ENCODE measurements at regions of chr18 and their contacts with region 1.

Region 1: DNA sequence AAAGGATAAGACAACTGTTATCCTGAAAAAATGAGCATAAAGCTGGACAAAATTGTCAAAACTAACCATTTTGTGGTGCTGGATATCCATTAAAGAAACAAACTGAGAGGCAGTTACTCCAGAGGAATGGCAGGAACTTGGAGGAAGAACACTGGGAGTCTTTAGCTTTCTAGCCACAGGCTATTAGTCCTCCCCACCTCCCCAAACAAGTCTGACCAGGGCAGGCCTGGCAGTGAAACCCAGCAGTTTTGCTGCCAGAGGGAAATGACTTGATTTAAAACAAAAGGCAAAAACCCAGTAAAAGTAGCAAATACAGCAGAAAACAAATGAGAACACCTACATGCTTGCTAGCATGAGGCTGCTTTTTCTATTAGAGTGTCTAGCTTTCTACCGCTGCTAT is 34.9 kb downstream of the OSBPL1A start:
- DNase-seq: no peak
- ATAC-seq: no peak
- H3K4me3 ChIP-seq: no peak overlapping the region
- H3K27ac ChIP-seq: no peak overlapping the region
- H3K4me1 ChIP-seq: no peaks in the 10 kb centered on the region
- H3K27me3 ChIP-seq: no peaks in the 10 kb centered on the region
- CTCF ChIP-seq: no peak

Region 2: GRCh38 chr18:24086082-24086481 is 276.7 kb before region 1 on chr18:
- intact Hi-C with region 1: no loop called
- DNase-seq: no peak
- ATAC-seq: no peak
- H3K4me3 ChIP-seq: no peak overlapping the region
- H3K27ac ChIP-seq: no peak overlapping the region
- H3K4me1 ChIP-seq: no peaks in the 10 kb centered on the region
- H3K27me3 ChIP-seq: no peaks in the 10 kb centered on the region
- CTCF ChIP-seq: no peak

Region 3: DNA sequence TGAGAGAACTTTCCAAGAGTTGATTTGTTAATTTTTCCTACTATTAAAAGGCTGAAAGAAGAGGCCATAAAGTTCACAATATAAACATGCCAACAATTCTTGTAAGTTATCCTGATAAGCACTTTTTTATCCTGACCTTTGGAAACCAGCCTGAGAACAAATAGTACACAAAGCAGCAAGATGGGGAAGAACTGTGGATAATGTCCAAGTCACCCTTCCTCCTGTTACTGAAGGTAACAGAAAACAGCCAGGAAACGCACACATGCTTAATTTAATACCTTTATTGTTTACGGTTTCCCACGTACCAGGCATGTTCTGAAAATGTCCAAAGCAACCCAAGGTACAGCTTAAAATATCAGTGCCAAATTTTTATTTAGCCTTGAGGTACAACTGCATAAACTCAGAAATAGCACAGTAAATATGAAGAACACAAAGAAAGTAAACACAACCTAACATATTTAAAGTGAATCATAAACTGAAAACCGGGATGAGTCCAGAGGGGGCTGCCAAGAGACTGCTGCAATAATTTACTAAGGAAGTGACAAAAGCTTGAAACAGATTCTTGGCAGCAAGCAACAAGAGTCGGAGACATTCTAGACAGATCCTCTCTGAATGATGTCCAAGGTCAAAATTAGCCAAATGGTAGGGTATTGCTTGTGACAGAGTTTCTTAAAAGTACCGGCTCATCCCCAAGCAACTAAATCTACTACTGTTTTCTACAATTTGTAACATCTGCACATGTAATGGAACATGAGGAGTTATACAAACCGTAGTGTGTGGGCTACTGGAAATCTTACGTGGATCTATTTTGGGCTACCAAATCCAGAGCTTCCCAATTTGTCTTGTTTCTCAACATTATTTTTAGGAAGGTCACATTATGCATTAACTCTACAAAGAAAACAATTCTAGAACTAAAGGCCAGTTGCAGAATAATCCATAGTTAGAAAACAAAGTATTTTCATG is 130.7 kb before region 1 on chr18:
- intact Hi-C with region 1: no loop called
- DNase-seq: no peak
- ATAC-seq: peak; percentile 52 to 62
- H3K4me3 ChIP-seq: no peak overlapping the region
- H3K27ac ChIP-seq: peak overlapping the region; percentile 10
- H3K4me1 ChIP-seq: peaks cover 6% of the 10 kb centered on the region
- H3K27me3 ChIP-seq: no peaks in the 10 kb centered on the region
- CTCF ChIP-seq: no peak

Region 4: DNA sequence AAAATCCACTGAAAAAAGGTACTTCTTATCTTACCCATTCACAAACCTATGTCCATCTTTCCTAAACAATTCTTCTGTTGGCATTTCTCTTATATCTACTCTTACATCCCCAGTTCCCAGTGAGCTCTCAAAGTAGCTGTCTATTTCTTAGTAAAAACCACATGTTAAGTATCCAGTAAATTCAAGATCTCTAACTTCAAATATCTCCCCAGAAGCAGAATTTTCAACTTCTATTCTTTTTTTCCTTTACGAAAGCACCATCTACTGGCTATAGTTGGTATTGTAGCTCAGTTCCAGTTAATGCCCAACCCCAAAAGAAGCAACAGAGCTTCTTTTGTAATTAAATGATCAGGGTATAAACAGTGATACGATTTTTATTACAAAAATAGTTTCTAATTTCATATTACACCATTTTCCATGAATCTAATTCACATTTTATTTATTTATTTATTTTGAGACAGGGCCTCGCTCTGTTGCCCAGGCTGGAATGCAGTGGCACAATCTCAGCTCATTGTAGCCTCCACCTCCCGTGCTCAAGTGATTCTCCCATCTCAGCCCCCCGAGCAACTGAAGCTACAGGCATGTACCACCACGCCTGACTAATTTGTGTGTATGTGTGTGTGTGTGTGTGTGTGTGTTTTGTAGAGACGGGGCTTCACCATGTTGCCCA is 126.2 kb after region 1 on chr18:
- intact Hi-C with region 1: loop called (anchors 5 kb)
- DNase-seq: no peak
- ATAC-seq: peak; percentile 60 to 74
- H3K4me3 ChIP-seq: no peak overlapping the region
- H3K27ac ChIP-seq: no peak overlapping the region
- H3K4me1 ChIP-seq: no peaks in the 10 kb centered on the region
- H3K27me3 ChIP-seq: no peaks in the 10 kb centered on the region
- CTCF ChIP-seq: peak; percentile 84

Region 5: GRCh38 chr18:24553571-24554285 is 191.0 kb after region 1 on chr18:
- intact Hi-C with region 1: no loop called
- DNase-seq: no peak
- ATAC-seq: no peak
- H3K4me3 ChIP-seq: no peak overlapping the region
- H3K27ac ChIP-seq: no peak overlapping the region
- H3K4me1 ChIP-seq: no peaks in the 10 kb centered on the region
- H3K27me3 ChIP-seq: no peaks in the 10 kb centered on the region
- CTCF ChIP-seq: no peak